Body of pancreas (tissue), 4 donors: ENCODE measurements at regions of chr5 and their contacts with region 1.

Region 1: DNA sequence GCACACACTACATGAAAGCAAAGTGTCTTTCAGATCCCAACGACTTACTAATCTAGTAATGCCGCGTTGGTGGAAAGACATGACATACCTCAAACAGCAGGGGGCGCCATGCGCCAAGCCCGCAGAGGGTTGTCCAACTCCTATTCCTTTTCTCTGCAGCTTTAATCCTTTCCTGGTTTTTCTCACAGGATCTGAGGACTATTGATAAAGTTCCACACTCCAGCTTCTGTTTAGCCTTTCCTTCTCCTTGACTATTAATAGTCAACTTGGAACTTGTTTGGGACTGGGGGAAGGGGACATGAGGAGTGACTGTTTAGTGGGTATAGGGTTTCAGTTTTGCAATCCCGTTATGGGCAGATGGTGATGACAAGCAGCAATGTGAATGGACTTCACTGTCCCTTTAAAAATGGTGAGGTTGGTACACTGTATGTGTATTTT is 62.9 kb downstream of the OTULIN start:
- DNase-seq: peak; percentile 75 to 78 (median 76)
- ATAC-seq: peak; percentile 85
- H3K4me3 ChIP-seq: no peak overlapping the region
- H3K27ac ChIP-seq: no peak overlapping the region
- H3K4me1 ChIP-seq: peaks cover 5% of the 10 kb centered on the region
- H3K27me3 ChIP-seq: no peaks in the 10 kb centered on the region
- CTCF ChIP-seq: peak; percentile 86 to 95 (median 93)
- POLR2A ChIP-seq: no peak

Region 2: DNA sequence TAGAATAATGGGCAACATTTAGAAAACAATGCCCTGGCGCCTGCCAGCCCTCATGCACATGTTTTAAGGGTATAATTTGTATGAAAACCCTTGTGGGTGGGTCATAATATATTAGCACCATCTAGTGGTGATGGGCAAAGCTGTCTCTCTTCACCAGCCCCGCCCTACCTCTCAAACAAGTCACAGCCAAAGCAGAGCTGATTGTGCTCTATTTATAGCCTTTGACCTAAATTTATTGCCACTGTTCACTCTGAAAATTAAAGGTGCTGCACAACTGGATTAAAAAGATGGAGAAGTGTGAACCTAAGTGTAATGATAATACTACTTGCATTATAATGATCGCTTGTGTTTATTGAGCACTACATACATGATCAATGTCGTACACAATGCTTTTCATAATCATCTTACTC is 276.1 kb after region 1 on chr5:
- intact Hi-C with region 1: loop called (anchors 5 kb)
- DNase-seq: peak; percentile 56 to 72 (median 67)
- ATAC-seq: peak; percentile 86
- H3K4me3 ChIP-seq: no peak overlapping the region
- H3K27ac ChIP-seq: no peak overlapping the region
- H3K4me1 ChIP-seq: peaks cover 7% of the 10 kb centered on the region
- H3K27me3 ChIP-seq: no peaks in the 10 kb centered on the region
- CTCF ChIP-seq: peak; percentile 47 to 83 (median 76)
- POLR2A ChIP-seq: no peak

Region 3: DNA sequence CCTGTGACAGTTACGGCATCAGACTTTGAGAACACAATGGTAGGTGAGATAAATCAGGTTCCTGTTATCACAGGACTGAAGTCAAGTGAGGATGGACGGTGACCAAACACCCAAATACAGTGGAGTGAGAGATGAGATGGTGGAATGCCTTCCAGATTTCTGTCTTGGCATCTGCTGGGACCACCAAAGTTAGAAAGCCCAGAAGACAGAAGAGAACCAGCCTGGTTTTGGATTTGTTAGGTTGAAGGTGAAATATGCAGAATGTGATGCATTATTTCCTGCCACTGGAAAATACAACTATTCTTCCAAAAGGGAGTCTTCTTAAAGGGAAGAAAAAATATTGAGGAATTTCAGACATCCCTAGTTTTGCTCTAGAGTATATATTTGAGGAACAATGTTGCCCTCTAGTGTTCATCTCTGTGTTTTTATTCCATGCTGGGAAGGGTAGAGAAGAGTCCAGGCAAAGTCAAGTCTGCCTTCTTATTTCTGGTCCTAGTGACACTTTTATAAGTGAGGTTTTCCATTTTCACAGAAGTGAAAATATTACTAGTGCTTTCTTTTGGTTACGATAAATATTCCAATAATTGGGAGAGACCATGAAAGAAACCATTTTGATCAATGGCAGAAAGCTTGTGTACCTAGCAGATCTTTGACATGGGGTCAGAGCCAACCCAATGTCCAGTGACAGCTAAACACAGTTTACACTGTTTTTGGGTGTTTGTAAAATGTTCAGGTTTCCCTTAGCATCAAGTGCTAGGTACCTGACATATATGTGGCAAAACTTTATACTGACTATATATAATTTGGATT is 286.4 kb after region 1 on chr5:
- intact Hi-C with region 1: loop called (anchors 5 kb)
- DNase-seq: peak in 1 of 4 donors; percentile 44
- ATAC-seq: peak; percentile 76
- H3K4me3 ChIP-seq: no peak overlapping the region
- H3K27ac ChIP-seq: no peak overlapping the region
- H3K4me1 ChIP-seq: peaks cover 15% of the 10 kb centered on the region
- H3K27me3 ChIP-seq: no peaks in the 10 kb centered on the region
- CTCF ChIP-seq: peak in 6 of 7 experiments; percentile 63 to 78 (median 74)
- POLR2A ChIP-seq: no peak